ENCODE measurements at regions of chrX and their contacts with region 1.

Region 1: DNA sequence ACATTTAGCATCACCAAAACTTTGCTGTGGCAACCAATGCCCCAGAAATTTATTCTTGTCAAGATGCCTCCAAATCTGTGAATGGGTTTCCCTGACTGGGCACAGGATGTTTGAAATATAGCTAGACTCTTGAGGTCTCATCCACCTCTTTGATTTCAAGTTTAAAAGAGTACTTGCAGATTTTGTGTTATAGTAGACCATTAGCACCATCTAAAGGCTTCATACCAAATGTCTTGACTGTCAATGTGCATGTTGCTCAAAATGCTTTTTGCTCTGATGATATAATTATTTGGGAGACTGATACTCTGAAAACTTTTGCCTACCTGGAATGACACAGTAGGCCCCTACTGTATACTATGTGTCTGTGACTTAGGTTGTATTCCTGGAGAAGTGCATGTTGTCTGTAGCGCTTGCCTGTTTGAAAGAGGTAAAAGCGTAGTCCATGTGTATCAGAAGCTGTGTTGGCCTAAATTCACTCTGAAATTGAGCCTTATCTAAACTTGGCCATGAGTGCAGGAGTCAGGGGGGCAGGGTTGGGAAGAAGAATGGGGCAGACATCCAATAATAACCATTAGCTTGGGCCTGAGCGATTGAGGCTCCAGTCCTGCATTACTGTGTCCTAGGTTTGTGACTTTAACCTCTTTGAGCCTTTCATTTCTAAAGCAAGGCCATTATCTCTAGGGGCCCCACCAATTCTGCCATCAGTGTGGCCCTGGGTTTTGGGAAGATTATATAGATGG is 33.8 kb downstream of the NDP start:
- DNase-seq: no peak
- H3K4me3 Mint-ChIP-seq: no peak overlapping the region
- H3K27ac Mint-ChIP-seq: no peak overlapping the region
- H3K4me1 Mint-ChIP-seq: peaks cover 9% of the 10 kb centered on the region
- H3K27me3 Mint-ChIP-seq: no peaks in the 10 kb centered on the region
- CTCF ChIP-seq: no peak

Region 2: GRCh38 chrX:43836435-43837184 is 102.7 kb before region 1 on chrX:
- CTCF ChIA-PET with region 1: interaction called, 5 read pairs
- intact Hi-C with region 1: loop called (anchors 1 kb)
- DNase-seq: no peak
- H3K4me3 Mint-ChIP-seq: no peak overlapping the region
- H3K27ac Mint-ChIP-seq: no peak overlapping the region
- H3K4me1 Mint-ChIP-seq: no peaks in the 10 kb centered on the region
- H3K27me3 Mint-ChIP-seq: no peaks in the 10 kb centered on the region
- CTCF ChIP-seq: peak; percentile 30

Region 3: DNA sequence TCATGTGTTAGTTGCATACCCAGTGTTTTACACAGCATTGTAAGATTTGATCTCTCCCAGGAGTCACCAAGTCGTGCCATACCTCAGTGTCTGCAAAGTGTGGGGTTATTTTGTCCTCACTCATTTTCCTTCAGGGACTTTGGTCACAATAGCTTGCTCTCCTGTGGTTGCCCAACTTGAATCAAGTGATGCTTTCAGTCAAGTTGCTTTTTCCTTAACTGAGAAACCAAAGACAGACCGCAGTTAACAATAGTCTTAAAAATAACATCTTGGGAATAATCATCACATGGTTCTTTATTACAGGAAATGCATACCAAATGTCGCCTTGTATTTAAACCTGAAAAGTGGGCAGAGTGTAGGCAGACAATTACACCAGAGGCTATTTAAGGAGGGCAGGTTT is 78.3 kb after region 1 on chrX:
- CTCF ChIA-PET with region 1: no interaction called
- intact Hi-C with region 1: no loop called
- DNase-seq: no peak
- H3K4me3 Mint-ChIP-seq: no peak overlapping the region
- H3K27ac Mint-ChIP-seq: no peak overlapping the region
- H3K4me1 Mint-ChIP-seq: peaks cover 3% of the 10 kb centered on the region
- H3K27me3 Mint-ChIP-seq: no peaks in the 10 kb centered on the region
- CTCF ChIP-seq: no peak

Region 4: DNA sequence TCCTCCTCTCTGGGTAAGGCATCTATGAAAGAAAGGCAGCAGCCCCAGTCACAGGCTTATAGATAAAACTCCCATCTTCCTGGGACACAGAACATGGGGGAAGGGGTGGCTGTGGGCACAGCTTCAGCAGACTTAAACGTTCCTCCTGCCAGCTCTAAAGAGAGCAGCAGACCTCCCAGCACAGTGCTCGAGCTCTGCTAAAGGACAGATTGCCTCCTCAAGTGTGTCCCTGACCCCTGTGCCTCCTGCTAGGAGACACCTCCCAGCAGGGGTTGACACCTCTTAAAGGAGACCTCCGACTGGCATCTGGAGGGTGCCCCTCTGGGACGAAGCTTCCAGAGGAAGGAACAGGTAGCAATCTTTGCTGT is 314.2 kb after region 1 on chrX:
- CTCF ChIA-PET with region 1: no interaction called
- intact Hi-C with region 1: no loop called
- DNase-seq: no peak
- H3K4me3 Mint-ChIP-seq: no peak overlapping the region
- H3K27ac Mint-ChIP-seq: no peak overlapping the region
- H3K4me1 Mint-ChIP-seq: no peaks in the 10 kb centered on the region
- H3K27me3 Mint-ChIP-seq: no peaks in the 10 kb centered on the region
- CTCF ChIP-seq: no peak

Region 5: DNA sequence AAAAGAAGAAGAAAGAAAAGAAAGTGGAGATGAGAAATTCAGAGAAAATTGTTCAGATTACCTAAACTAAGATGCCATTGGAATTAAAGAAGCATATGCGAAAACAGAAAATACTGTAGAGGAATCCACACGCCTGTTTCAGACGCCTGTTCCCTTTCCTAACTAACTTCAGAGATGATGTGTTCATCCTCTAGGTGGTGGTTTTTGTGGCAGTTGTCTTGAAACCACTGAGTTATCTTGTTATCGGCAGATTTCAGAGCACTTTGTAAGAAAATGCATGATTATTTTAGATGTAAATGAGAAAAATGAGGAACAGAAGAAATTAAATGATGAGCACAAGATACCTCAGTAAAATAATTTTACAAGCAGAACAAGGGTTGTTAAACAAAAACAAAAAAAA is 555.0 kb after region 1 on chrX:
- CTCF ChIA-PET with region 1: no interaction called
- intact Hi-C with region 1: no loop called
- DNase-seq: no peak
- H3K4me3 Mint-ChIP-seq: no peak overlapping the region
- H3K27ac Mint-ChIP-seq: no peak overlapping the region
- H3K4me1 Mint-ChIP-seq: no peaks in the 10 kb centered on the region
- H3K27me3 Mint-ChIP-seq: no peaks in the 10 kb centered on the region
- CTCF ChIP-seq: no peak

Region 6: DNA sequence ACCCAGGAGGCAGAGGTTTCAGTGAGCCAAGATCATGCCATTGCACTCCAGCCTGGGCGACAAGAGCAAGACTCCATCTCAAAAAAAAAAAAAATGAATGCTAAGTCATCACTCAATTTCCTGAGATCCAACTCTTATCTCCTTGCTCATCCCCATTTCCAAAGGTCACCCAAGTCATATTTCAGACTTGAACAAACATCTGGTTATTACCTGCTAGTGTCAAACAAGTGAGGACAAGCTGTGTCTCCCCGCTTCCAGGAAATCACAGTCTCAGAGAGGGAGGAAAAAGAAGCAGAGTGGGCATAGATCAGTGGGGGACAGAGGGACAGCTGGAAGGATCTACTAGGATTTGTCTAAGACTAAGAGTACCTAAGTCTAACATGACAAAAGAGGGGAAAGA is 750.8 kb after region 1 on chrX:
- CTCF ChIA-PET with region 1: no interaction called
- intact Hi-C with region 1: no loop called
- DNase-seq: no peak
- H3K4me3 Mint-ChIP-seq: no peak overlapping the region
- H3K27ac Mint-ChIP-seq: no peak overlapping the region
- H3K4me1 Mint-ChIP-seq: peaks cover 13% of the 10 kb centered on the region
- H3K27me3 Mint-ChIP-seq: no peaks in the 10 kb centered on the region
- CTCF ChIP-seq: no peak

Measured in Calu3 (cell line).